Naive thymus-derived CD8-positive, alpha-beta T cell (primary cell): ENCODE measurements at regions of chr21 and their contacts with region 1.

Region 1: DNA sequence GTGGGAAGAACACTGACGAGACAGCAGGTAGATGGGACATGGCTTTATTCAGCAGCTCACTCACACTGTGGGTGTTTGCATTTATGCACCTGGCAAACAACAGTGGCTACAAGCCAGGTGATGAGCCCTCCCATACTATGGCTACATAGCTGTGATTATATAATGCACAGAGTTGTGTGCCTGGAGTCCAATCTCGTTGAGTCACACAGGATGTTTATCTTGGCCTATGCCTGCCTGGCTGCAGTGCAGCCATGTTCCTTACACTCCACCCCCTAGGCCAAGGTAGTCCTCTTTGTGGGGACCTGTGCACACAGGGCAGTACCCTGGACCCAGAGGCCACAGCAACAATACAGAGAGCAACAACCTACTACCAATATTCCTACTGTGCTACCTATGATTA is 1643.8 kb downstream of the MRPL39 start:
- DNase-seq: no peak
- ATAC-seq: no peak
- H3K4me3 Mint-ChIP-seq: no peak overlapping the region
- H3K27ac Mint-ChIP-seq: no peak overlapping the region
- H3K4me1 Mint-ChIP-seq: peaks cover 1 to 9% (median 5%) of the 10 kb centered on the region in 4 donors
- H3K27me3 Mint-ChIP-seq: no peaks in the 10 kb centered on the region

Region 2: GRCh38 chr21:23853796-23854379 is 109.6 kb before region 1 on chr21:
- POLR2A ChIA-PET with region 1: interaction called, 10 read pairs
- DNase-seq: peak in 6 of 10 donors; percentile 5 to 60 (median 34)
- ATAC-seq: peak; percentile 74 to 82
- H3K4me3 Mint-ChIP-seq: no peak overlapping the region
- H3K27ac Mint-ChIP-seq: peak overlapping the region in 1 of 10 donors; percentile 22
- H3K4me1 Mint-ChIP-seq: peaks cover 5 to 20% (median 9%) of the 10 kb centered on the region in 4 donors
- H3K27me3 Mint-ChIP-seq: no peaks in the 10 kb centered on the region

Region 3: DNA sequence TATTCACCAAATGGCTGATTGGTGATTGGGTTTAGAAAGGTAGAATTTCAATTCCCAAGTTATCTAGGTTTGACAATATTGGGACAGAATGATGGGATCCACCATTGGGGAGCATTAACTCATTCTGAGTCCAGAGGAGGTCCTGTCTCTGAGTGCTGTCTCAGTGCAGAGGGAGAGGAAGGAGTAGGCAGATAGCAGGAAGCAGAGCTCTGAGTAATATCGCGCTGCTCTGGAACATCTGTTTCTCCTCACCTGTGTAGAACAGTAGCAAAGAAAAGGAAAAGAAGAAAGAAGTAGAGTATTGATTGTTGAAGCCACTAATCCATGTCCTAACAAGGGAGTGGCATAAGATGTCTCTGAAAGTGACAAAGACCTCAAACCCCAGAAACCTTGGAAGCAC is 14.0 kb before region 1 on chr21:
- POLR2A ChIA-PET with region 1: no interaction called
- DNase-seq: no peak
- ATAC-seq: no peak
- H3K4me3 Mint-ChIP-seq: peak overlapping the region in 5 of 10 donors; percentile 4 to 57 (median 11)
- H3K27ac Mint-ChIP-seq: peak overlapping the region in 4 of 10 donors; percentile 4 to 12 (median 10)
- H3K4me1 Mint-ChIP-seq: peaks cover 16 to 39% (median 23%) of the 10 kb centered on the region in 4 donors
- H3K27me3 Mint-ChIP-seq: no peaks in the 10 kb centered on the region